Endothelial cell of umbilical vein (primary cell): ENCODE measurements at regions of chr1 and their contacts with region 1.

Region 1: DNA sequence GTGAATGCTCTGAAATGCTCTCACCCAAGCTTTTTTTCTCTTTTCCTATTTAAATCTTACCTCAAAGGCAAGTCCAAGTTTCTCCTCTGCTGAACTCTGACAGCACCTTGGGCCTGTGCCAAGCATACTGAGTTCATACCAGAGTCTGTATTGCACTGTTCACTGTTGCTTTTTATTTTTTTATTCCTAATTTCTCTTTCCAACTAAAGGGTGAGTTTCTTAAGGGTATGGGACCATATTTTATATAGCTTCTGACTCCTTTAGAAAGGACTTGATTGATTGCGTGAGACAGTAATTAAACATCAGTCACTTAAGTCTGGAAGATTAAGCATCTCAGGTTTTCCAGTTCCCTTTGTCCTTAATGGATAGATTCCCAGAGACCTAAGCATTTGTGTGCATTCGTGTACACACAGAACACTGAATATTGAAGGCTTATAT is 69.9 kb downstream of the CACHD1 start:
- DNase-seq: peak; percentile 84
- H3K4me3 ChIP-seq: peak overlapping the region in 1 of 3 experiments; percentile 22
- H3K27ac ChIP-seq: peak overlapping the region; percentile 60
- H3K4me1 ChIP-seq: peaks cover 22% of the 10 kb centered on the region
- H3K27me3 ChIP-seq: no peaks in the 10 kb centered on the region
- CTCF ChIP-seq: no peak
- POLR2A ChIP-seq: no peak

Region 2: GRCh38 chr1:64476251-64476952 is 63.4 kb before region 1 on chr1:
- CTCF ChIA-PET with region 1: no interaction called
- POLR2A ChIA-PET with region 1: no interaction called
- dilution Hi-C with region 1: no loop called
- intact Hi-C with region 1: loop called (anchors 2 kb)
- DNase-seq: peak; percentile 93
- H3K4me3 ChIP-seq: no peak overlapping the region
- H3K27ac ChIP-seq: peak overlapping the region; percentile 73
- H3K4me1 ChIP-seq: peaks cover 58% of the 10 kb centered on the region
- H3K27me3 ChIP-seq: no peaks in the 10 kb centered on the region
- CTCF ChIP-seq: no peak
- POLR2A ChIP-seq: peak; percentile 64